Common myeloid progenitor, CD34-positive (primary cell): ENCODE measurements at regions of chr1 and their contacts with region 1.

Region 1: DNA sequence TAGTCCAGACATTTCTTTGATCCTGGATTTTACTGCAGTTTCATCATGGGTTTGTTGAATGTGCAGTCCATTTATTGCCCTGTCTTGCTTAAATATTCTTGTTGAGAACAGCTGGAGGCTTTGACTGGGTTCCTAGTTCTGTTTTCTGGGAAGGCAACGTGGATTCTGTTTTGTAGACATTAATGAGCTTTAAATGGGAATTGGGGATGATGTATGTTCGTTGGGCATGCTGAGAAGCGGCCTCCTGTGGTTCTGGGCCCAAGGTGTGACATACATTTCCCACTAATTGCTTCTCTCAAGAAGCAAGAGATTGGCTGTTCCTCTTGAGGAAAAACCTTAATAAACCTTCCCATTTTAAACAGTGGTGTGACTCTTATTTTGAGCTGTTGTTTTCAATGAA is 22.9 kb downstream of the INKA2 start:
- DNase-seq: no peak
- H3K4me3 ChIP-seq: no peak overlapping the region
- H3K27ac ChIP-seq: no peak overlapping the region
- H3K4me1 ChIP-seq: peaks cover 0 to 2% (median 0%) of the 10 kb centered on the region in 4 experiments
- H3K27me3 ChIP-seq: no peaks in the 10 kb centered on the region

Region 2: GRCh38 chr1:111704776-111705175 is 11.6 kb before region 1 on chr1:
- CTCF ChIA-PET with region 1: interaction called, 39 read pairs
- POLR2A ChIA-PET with region 1: interaction called, 3 read pairs
- DNase-seq: no peak
- H3K4me3 ChIP-seq: no peak overlapping the region
- H3K27ac ChIP-seq: no peak overlapping the region
- H3K4me1 ChIP-seq: no peaks in the 10 kb centered on the region
- H3K27me3 ChIP-seq: no peaks in the 10 kb centered on the region

Region 3: GRCh38 chr1:111739194-111739924 is 23.0 kb after region 1 on chr1 and contains the start of gene INKA2:
- CTCF ChIA-PET with region 1: interaction called, 62 read pairs
- POLR2A ChIA-PET with region 1: interaction called, 7 read pairs
- DNase-seq: peak; percentile 63 to 86 (median 80)
- H3K4me3 ChIP-seq: peak within 1 kb of the TSS; percentile 42 to 80 (median 64)
- H3K27ac ChIP-seq: peak within 1 kb of the TSS in 1 of 2 experiments; percentile 30
- H3K4me1 ChIP-seq: peaks cover 4 to 65% (median 40%) of the 10 kb centered on the region in 4 experiments
- H3K27me3 ChIP-seq: peaks cover 0 to 27% (median 13%) of the 10 kb centered on the region in 5 experiments

Region 4: DNA sequence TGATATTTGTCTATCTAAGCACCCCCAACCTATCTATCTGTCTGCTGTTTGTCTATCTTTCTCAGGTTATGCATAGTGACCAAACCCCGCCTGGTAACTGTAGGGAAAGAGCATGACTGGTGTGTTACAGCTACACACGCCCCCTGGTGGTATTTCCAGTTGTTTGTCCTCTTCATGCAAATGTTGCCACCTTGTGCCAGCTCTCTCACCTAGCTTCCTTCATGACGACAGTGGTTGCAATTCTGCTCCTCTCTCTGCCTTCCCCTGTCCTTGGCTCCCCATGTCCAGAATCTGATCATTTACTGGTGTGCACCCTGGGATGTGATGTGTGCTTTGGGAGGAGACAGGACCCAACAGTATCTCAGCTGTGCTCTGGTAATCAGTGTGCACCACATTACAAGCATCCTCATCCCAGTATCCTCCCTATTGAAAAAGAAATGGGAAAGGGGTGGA is 31.0 kb after region 1 on chr1:
- CTCF ChIA-PET with region 1: interaction called, 58 read pairs
- POLR2A ChIA-PET with region 1: interaction called, 7 read pairs
- DNase-seq: peak; percentile 74 to 85 (median 81)
- H3K4me3 ChIP-seq: no peak overlapping the region
- H3K27ac ChIP-seq: no peak overlapping the region
- H3K4me1 ChIP-seq: peaks cover 0 to 19% (median 8%) of the 10 kb centered on the region in 4 experiments
- H3K27me3 ChIP-seq: peaks cover 0 to 6% (median 1%) of the 10 kb centered on the region in 5 experiments

Region 5: DNA sequence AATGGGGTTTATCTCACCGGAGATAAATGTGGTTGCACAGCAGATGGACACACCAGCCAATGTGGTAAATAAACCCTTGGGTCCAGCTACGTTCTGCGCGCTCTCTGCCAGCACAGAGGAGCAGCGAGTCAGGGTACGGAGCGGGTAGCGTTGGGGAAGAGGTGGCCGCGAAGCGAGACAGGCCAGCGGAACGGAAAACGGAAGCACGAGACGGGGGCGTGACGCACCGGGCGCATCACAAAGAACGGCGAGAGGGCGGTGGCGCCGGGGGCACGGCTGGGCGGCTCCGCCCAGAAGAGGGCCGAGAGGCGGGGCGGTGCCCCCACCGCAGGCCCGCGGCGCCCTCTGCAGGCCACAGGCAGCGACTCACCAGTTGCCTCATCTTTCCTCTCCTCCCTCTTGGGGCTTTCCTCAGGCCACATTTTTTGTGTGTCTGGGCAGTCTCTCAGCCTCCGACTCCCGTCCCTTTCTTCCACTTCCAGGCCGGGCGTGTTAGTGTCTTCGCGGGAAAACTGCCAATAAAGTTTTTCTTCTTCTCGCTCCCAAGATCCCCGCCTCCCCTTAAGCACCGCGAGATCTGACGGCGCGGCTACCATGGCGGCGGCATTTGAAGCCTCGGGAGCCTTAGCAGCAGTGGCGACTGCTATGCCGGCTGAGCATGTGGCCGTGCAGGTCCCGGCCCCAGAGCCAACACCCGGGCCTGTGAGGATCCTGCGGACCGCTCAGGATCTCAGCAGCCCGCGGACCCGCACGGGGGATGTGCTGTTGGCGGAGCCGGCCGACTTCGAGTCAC is 39.2 kb after region 1 on chr1 and contains the start of gene DDX20:
- CTCF ChIA-PET with region 1: interaction called, 213 read pairs
- POLR2A ChIA-PET with region 1: interaction called, 7 read pairs
- DNase-seq: peak; percentile 96 to 98 (median 98)
- H3K4me3 ChIP-seq: peak within 1 kb of the TSS; percentile 57 to 92 (median 85)
- H3K27ac ChIP-seq: peak within 1 kb of the TSS; percentile 92 to 96
- H3K4me1 ChIP-seq: peaks cover 6 to 31% (median 19%) of the 10 kb centered on the region in 4 experiments
- H3K27me3 ChIP-seq: no peaks in the 10 kb centered on the region

Region 6: GRCh38 chr1:111851552-111851951 is 135.2 kb after region 1 on chr1:
- CTCF ChIA-PET with region 1: no interaction called
- POLR2A ChIA-PET with region 1: no interaction called
- DNase-seq: no peak
- H3K4me3 ChIP-seq: no peak overlapping the region
- H3K27ac ChIP-seq: no peak overlapping the region
- H3K4me1 ChIP-seq: no peaks in the 10 kb centered on the region
- H3K27me3 ChIP-seq: peaks cover 2 to 69% (median 18%) of the 10 kb centered on the region in 5 experiments